Activated CD4-positive, alpha-beta T cell treated with anti-CD3 and anti-CD28 coated beads, Interleukin-2, amount 10 ng/mL, durations not matched to agents 24 days and 14 days (primary cell): ENCODE measurements at regions of chr12 and their contacts with region 1.

Region 1: DNA sequence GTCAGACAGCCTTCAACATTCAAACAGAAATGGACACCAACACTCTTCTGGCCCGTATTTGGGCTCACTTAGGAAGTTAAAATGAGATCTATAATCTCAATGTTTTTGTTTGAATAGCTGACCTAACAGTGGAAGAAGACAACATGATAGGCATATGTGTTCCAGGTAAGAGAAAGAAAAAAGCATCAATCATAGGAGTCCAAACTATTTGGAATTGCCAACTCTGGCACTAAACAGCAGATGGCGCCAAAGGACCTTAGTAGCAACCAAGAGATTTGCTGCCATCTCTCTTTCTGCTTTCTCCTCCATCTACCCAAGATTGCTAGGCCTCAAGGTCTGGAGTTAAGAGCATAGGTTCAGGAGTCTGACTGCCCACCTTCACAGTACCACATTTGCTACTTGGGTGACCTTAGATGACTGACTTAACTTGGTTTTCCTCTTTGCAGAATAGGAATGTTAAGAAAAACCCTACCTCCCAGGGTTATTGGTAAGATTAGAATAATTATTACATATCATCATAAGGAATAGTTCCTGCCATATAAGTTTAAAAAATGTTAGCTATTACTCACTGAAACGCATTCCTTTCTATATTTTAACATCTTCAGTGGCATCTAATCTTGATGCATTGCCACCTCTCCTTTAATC is 30.2 kb downstream of the PEX5 start:
- DNase-seq: peak; percentile 91
- H3K4me3 Mint-ChIP-seq: no peak overlapping the region
- H3K27ac Mint-ChIP-seq: no peak overlapping the region
- H3K4me1 Mint-ChIP-seq: no peaks in the 10 kb centered on the region
- H3K27me3 Mint-ChIP-seq: no peaks in the 10 kb centered on the region

Region 2: GRCh38 chr12:7460375-7461259 is 240.9 kb after region 1 on chr12:
- intact Hi-C with region 1: loop called (anchors 1 kb)
- DNase-seq: peak; percentile 85
- H3K4me3 Mint-ChIP-seq: no peak overlapping the region
- H3K27ac Mint-ChIP-seq: no peak overlapping the region
- H3K4me1 Mint-ChIP-seq: no peaks in the 10 kb centered on the region
- H3K27me3 Mint-ChIP-seq: peaks cover 10% of the 10 kb centered on the region